Activated CD4-positive, alpha-beta T cell treated with anti-CD3 and anti-CD28 coated beads for 36 hours (primary cell): ENCODE measurements at regions of chr17 and their contacts with region 1.

Region 1: DNA sequence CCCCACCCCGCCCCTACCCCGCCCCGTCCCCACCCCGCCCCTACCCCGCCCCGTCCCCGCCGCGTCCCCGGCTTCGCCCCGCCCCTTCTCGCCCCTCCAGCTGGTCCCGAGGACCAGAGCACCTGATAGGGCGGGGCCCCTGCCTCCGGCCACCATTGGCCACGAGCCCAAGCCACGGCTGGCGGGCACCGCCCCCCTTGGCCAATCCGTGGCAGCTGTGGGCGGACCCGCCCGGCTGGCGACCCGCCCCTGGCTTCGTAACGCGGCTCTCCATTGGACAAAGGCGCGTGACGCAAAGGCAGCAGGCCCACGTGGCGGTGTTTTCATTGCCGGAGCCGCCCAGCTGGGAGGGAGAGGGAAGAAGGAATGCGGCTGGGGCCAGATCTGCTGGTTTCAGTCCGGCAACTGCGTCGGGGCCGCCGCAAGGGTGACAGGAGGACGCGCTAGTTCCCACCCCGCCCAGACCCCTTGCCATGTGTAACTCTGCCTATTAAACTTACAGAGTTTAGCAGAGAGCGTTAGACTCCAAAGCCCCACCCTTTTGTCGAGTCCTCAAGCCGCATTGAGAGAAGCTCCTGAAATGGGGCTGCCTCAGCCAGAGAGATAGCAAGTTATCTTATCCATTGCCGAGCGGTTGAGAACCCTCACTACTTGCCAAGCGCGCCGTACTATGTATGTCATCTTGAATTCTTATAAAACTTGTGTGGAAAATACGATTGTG is 403 bp upstream of the WIPI1 start:
- DNase-seq: peak; percentile 99
- ATAC-seq: peak; percentile 87
- H3K4me3 Mint-ChIP-seq: peak overlapping the region; percentile 64
- H3K27ac Mint-ChIP-seq: peak overlapping the region; percentile 64
- H3K4me1 Mint-ChIP-seq: peaks cover 61% of the 10 kb centered on the region
- H3K27me3 Mint-ChIP-seq: no peaks in the 10 kb centered on the region

Region 2: GRCh38 chr17:67959288-67959900 is 498.3 kb before region 1 on chr17:
- CTCF ChIA-PET with region 1: interaction called, 3 read pairs
- POLR2A ChIA-PET with region 1: no interaction called
- intact Hi-C with region 1: loop called in 1 of 2 experiments (anchors 2 kb)
- DNase-seq: no peak
- ATAC-seq: no peak
- H3K4me3 Mint-ChIP-seq: no peak overlapping the region
- H3K27ac Mint-ChIP-seq: peak overlapping the region; percentile 66
- H3K4me1 Mint-ChIP-seq: peaks cover 16% of the 10 kb centered on the region
- H3K27me3 Mint-ChIP-seq: no peaks in the 10 kb centered on the region

Region 3: DNA sequence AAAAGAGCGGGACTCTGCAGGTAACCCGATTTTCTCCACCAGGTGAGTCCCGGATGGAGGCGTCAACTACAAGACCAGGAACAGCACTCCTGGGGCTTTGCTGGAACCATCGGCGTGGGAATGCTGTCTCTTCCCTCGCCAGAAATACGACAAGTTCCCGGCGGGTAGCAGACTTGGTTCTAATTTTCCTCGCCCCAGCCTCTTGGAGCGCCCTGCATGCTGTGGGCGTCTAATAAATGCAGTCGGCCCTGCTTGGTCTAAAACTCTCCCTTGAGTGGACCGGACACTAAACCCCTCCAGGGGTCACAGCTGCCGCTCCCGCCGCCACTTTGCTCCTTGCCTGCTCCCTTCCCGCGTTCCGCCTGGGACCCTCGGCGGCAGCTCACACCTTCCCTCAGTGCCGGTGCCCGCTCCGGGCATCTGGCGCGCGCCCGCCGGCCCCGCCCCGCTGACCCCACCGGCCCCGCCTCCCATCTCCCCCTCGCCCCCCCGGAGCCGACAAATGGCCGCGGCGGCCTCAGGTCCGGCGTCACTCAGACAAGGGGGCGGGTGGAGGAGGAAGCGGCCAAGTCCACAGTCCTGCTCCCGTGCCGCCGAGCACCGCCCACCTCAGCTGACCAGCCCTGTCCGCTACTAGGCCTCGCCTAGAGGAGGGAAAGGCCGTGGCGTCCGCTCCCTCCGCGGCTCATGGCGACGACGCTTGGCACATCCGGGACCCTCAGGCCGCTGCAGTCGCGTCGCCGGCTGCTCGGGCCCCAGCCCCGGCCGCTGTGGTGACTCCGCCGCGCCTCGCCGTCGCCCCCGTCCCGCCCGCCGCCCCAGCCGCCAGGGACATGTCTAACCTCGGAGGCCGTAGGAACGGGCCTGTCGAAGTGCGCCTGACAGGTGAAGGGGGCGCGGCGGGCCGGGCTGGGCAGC is 356.4 kb before region 1 on chr17:
- CTCF ChIA-PET with region 1: no interaction called
- POLR2A ChIA-PET with region 1: no interaction called
- intact Hi-C with region 1: loop called in 1 of 2 experiments (anchors 5 kb)
- DNase-seq: peak; percentile 71
- ATAC-seq: peak; percentile 63
- H3K4me3 Mint-ChIP-seq: peak overlapping the region; percentile 87
- H3K27ac Mint-ChIP-seq: peak overlapping the region; percentile 91
- H3K4me1 Mint-ChIP-seq: peaks cover 31% of the 10 kb centered on the region
- H3K27me3 Mint-ChIP-seq: no peaks in the 10 kb centered on the region

Region 4: DNA sequence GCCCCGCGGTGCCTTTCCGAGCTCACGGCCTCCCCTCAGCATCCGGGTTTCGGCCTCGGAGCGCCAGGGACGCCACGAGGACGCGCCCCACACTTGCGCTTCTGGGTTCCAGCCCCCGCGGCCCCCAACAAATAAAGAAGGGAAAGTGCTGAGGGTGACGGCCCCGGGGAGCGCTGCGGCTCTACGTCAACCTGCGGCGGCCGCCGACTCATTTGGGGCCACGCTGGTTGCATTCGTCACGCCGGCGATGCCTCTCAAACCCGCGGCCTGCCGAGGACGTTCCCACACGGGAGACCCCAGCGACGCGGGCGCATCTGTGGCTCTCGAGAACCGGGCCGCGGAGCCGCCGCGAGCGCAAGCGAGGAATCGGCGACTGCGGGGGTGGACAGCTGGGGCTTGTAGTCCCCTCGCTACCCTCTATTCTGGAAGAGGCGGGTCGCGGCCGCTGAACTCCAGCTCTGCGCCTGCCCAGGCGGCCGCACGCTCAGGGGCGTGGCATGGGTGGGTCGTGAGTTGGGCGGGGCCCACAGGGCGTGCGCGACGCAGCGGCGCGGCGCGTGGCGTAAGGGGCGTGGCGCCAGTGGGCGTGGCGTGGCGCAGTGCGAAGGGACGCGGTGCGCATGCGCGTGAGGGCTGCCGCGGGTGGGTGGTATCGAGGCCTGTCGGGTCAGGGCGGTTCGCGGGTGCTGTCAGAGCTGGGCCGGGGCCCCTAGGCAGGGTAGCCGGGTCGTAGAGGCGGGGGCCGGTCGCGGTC is 210.1 kb before region 1 on chr17 and contains the start of gene AMZ2:
- CTCF ChIA-PET with region 1: interaction called, 4 read pairs
- POLR2A ChIA-PET with region 1: interaction called, 5 read pairs
- intact Hi-C with region 1: loop called (anchors 1 to 5 kb)
- DNase-seq: peak; percentile 98
- ATAC-seq: peak; percentile 84
- H3K4me3 Mint-ChIP-seq: peak within 1 kb of the TSS; percentile 88
- H3K27ac Mint-ChIP-seq: peak within 1 kb of the TSS; percentile 99
- H3K4me1 Mint-ChIP-seq: peaks cover 37% of the 10 kb centered on the region
- H3K27me3 Mint-ChIP-seq: no peaks in the 10 kb centered on the region
- total RNA-seq, gene AMZ2: 119 to 150 TPM

Region 5: DNA sequence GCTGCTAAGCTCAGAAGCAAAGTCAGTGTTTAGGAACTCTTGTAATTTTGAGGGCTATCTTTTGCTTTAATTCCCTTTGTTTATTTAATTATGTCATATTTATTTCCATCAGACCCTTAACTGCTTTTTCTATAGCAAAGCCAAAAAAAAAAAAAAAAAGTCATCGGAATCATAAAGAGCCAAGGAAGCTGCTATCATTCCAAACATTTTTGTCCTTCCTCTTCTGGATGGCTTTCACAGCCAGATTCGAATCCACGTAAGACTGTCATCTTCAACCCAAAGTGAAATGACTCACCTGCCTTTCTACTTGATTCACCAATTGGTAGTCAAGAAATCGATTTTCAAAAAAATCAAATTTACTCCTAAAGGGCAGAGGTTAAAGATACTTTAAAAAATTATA is 38.8 kb before region 1 on chr17:
- CTCF ChIA-PET with region 1: no interaction called
- POLR2A ChIA-PET with region 1: no interaction called
- intact Hi-C with region 1: loop called in 1 of 2 experiments (anchors 1 kb)
- DNase-seq: no peak
- ATAC-seq: no peak
- H3K4me3 Mint-ChIP-seq: no peak overlapping the region
- H3K27ac Mint-ChIP-seq: no peak overlapping the region
- H3K4me1 Mint-ChIP-seq: peaks cover 19% of the 10 kb centered on the region
- H3K27me3 Mint-ChIP-seq: no peaks in the 10 kb centered on the region

Region 6: DNA sequence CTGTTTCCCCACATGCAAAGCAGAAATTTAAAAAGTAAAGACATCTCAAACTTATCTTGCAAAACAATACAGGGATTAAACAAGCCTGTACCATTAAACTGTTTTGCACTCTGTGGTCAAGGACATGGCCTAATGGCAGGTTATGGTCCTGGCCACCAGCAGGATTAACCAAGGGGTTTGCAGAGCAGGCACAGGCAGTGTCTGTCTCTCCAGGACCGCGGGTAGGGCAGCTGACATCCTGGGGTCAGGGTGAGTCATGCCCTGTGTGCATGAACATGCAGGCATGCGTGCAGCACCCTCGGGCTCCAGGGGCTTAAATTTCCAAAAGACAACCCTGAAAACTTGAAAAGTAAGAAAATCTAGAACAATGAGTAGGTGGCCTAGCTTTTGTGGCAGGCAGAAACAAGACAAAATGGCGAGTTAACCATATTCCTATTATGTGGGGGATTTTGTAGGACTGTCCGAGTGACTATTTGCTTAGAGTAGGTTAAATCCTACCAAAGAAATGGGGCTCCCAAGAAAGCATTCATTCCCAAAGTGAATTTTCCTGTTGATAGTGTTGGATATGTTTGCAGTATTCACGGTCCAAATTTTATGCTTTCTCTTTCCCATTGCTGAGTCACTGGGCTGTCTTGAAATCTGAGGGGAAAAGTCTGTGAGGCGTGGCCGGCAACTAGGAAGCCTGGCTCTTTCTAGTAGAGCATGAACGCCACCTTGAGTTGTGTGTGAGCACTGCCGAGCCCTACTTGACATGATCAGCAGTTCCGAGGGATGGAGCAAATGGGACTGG is 301.8 kb after region 1 on chr17:
- CTCF ChIA-PET with region 1: no interaction called
- POLR2A ChIA-PET with region 1: no interaction called
- intact Hi-C with region 1: loop called in 1 of 2 experiments (anchors 10 kb)
- DNase-seq: peak; percentile 80
- ATAC-seq: peak; percentile 96
- H3K4me3 Mint-ChIP-seq: peak overlapping the region; percentile 38
- H3K27ac Mint-ChIP-seq: no peak overlapping the region
- H3K4me1 Mint-ChIP-seq: peaks cover 12% of the 10 kb centered on the region
- H3K27me3 Mint-ChIP-seq: peaks cover 2% of the 10 kb centered on the region